T-cell (primary cell): ENCODE measurements at regions of chr19 and their contacts with region 1.

Region 1: GRCh38 chr19:862581-863314 is 3.3 kb downstream of the CFD start:
- DNase-seq: peak; percentile 60 to 85 (median 78)
- ATAC-seq: peak; percentile 50 to 63 (median 60)
- H3K4me3 ChIP-seq: peak overlapping the region; percentile 5 to 29
- H3K4me3 Mint-ChIP-seq: peak overlapping the region; percentile 70 to 75 (median 72)
- H3K27ac ChIP-seq: no peak overlapping the region
- H3K27ac Mint-ChIP-seq: peak overlapping the region in 1 of 2 donors; percentile 66
- H3K4me1 ChIP-seq: peaks cover 7 to 37% of the 10 kb centered on the region in 2 experiments
- H3K4me1 Mint-ChIP-seq: peaks cover 19 to 23% (median 22%) of the 10 kb centered on the region in 3 donors
- H3K27me3 ChIP-seq: peaks cover 0 to 43% of the 10 kb centered on the region in 2 experiments
- H3K27me3 Mint-ChIP-seq: peaks cover 0 to 6% of the 10 kb centered on the region in 2 donors

Region 2: DNA sequence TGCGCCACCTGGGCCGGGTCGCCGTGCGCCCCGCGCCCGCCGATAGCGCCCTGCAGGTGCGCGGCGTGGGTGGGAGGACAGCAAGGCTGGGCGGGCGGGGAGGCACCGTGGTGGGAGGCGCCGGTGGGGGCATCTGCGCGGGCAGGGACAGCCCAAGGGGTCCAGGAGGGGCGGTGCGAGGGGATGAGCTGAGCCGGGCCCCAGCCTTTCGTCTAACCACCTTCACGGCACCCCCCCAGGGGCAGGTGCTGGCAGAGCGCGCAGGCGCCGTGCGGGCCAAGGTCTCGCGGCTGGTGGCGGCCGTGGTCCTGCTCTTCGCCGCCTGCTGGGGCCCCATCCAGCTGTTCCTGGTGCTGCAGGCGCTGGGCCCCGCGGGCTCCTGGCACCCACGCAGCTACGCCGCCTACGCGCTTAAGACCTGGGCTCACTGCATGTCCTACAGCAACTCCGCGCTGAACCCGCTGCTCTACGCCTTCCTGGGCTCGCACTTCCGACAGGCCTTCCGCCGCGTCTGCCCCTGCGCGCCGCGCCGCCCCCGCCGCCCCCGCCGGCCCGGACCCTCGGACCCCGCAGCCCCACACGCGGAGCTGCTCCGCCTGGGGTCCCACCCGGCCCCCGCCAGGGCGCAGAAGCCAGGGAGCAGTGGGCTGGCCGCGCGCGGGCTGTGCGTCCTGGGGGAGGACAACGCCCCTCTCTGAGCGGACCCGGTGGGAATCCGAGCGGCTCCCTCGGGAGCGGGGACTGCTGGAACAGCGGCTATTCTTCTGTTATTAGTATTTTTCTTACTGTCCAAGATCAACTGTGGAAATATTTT is 57.5 kb after region 1 on chr19:
- CTCF ChIA-PET with region 1: interaction called, 6 to 14 read pairs
- POLR2A ChIA-PET with region 1: interaction called in 1 of 2 experiments, 6 read pairs
- DNase-seq: peak; percentile 40 to 82 (median 63)
- ATAC-seq: peak; percentile 54 to 67 (median 55)
- H3K4me3 ChIP-seq: peak overlapping the region; percentile 40 to 51
- H3K4me3 Mint-ChIP-seq: peak overlapping the region; percentile 73 to 82 (median 81)
- H3K27ac ChIP-seq: no peak overlapping the region
- H3K27ac Mint-ChIP-seq: peak overlapping the region; percentile 75 to 80
- H3K4me1 ChIP-seq: peaks cover 12 to 66% of the 10 kb centered on the region in 2 experiments
- H3K4me1 Mint-ChIP-seq: peaks cover 13 to 23% (median 21%) of the 10 kb centered on the region in 3 donors
- H3K27me3 ChIP-seq: peaks cover 0 to 40% of the 10 kb centered on the region in 2 experiments
- H3K27me3 Mint-ChIP-seq: peaks cover 0 to 2% of the 10 kb centered on the region in 2 donors

Region 3: DNA sequence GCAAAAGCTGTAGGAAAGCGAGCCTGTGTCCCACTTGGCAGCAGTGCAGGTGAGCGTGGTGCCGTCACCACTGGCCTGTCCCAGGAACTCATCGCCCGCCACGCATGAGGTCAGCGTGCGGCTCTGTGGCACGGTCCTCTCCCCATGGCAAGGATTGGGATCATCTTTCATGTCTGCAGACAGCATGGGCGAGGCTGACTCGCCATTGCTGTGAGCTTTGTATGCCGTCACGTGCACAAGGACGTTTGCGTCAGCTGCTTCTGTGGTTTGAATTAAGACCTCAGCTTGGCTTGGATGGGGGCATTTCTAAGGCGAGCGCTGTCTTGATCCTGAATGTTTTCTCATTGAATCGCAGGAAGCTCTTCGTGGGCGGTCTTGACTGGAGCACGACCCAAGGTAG is 554.4 kb after region 1 on chr19:
- CTCF ChIA-PET with region 1: no interaction called
- POLR2A ChIA-PET with region 1: no interaction called
- DNase-seq: no peak
- ATAC-seq: no peak
- H3K4me3 ChIP-seq: no peak overlapping the region
- H3K4me3 Mint-ChIP-seq: peak overlapping the region in 1 of 3 donors; percentile 27
- H3K27ac ChIP-seq: no peak overlapping the region
- H3K27ac Mint-ChIP-seq: no peak overlapping the region
- H3K4me1 ChIP-seq: peaks cover 0 to 58% of the 10 kb centered on the region in 2 experiments
- H3K4me1 Mint-ChIP-seq: peaks cover 37 to 55% (median 53%) of the 10 kb centered on the region in 3 donors
- H3K27me3 ChIP-seq: no peaks in the 10 kb centered on the region
- H3K27me3 Mint-ChIP-seq: no peaks in the 10 kb centered on the region